Upper lobe of right lung (tissue), 1 donor: ENCODE measurements at regions of chr21 and their contacts with region 1.

Region 1: GRCh38 chr21:25708467-25709065 is 26.1 kb downstream of the ATP5PF start:
- DNase-seq: no peak
- ATAC-seq: peak; percentile 54
- H3K4me3 ChIP-seq: no peak overlapping the region
- H3K27ac ChIP-seq: no peak overlapping the region
- H3K4me1 ChIP-seq: no peaks in the 10 kb centered on the region
- H3K27me3 ChIP-seq: no peaks in the 10 kb centered on the region
- CTCF ChIP-seq: peak; percentile 87

Region 2: DNA sequence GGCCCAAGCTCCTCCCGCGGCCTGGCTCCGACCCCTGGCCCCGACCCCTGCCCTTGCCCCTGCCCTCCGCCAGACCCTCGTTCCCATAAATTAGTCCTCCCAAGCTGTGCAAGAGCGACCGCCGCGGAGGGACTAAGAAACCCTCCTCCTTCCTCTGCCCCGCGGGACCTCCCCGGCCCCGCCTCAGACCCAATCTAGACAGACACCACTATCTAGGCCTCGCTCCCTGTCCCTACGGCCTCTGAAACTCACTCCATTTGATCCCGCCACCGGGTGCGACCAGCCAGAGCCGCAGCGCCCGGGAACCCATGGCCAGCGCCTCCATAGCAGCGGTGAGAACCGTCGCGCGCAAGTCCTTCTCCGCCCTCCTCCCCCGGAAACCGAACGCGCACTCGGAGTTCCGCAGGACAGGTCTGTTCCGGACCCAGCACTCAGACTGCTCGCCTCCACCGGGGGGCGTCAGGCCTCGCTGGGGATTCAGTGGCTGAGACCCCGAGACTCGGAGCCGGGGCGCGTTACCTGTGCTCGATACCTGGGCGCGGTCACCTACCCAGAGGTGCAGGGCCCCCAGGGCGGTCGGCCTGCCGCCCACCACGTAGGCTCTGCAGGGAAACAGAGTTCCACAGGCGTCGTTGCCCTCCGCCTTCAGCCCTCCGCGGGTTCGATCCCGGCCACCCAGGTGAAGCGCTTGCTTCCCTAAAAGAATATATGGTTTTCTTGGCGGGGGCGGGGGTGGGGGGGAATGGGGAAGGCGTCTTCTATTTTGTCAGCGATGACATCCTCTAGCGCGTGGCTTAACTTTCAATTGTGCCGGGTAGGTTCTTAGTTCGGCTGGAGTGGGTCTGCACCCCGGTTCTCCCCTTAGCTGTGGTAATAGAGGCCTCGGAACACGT is 101.2 kb before region 1 on chr21 and contains the start of gene MRPL39:
- intact Hi-C with region 1: loop called (anchors 5 kb)
- DNase-seq: peak; percentile 95
- ATAC-seq: peak; percentile 98
- H3K4me3 ChIP-seq: peak within 1 kb of the TSS; percentile 84
- H3K27ac ChIP-seq: peak within 1 kb of the TSS; percentile 87
- H3K4me1 ChIP-seq: peaks cover 15% of the 10 kb centered on the region
- H3K27me3 ChIP-seq: no peaks in the 10 kb centered on the region
- CTCF ChIP-seq: peak; percentile 52
- total RNA-seq, gene MRPL39: 19.9 TPM